Endothelial cell of umbilical vein (primary cell): ENCODE measurements at regions of chr10 and their contacts with region 1.

Region 1: DNA sequence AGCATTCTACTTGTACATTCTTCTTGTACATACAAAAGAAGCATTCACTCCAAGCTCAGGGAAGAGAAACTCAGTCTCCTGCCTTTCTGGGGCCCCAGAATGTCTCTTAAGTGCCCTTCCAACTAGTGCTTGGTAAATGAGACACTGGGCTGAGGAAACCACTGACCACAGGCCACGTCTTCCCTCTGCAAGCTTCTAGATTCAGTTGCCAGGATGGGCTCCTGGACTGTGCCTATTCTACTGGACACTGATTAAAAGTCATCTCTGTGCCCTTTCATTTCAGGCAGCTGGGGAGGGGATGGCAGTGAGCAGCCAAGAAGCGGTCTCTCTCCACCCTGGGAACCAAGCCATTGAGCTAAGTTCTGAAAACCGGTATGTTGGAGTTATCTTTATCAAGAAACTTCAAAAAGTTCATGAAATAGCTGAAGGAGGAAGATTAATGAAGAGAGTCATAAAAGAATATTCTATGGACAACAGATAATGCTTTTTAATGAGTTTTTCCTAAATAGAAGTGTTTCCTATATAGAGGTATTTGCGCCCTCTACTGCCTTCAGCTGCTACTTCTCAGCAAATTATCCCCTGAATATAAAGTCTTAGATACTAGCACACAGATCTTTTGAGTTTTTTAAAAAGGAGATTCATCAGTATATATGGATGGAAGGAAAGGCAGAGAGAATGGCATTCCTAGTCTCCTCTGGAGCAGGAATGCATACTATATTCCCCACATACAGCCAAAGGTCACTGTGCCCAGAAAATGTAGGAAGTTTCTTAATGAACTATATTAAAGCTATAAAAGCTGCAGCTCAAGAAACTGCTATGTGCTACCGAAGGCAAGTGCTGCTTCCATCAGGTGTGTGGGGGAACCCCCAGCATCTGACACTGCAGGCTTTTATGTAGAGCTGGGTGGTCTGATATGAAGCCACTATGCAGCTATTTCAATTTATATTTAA is 8.4 kb upstream of the IFIT1B start:
- DNase-seq: peak; percentile 61
- H3K4me3 ChIP-seq: no peak overlapping the region
- H3K27ac ChIP-seq: no peak overlapping the region
- H3K4me1 ChIP-seq: peaks cover 6% of the 10 kb centered on the region
- H3K27me3 ChIP-seq: peaks cover 4 to 8% of the 10 kb centered on the region in 2 experiments
- CTCF ChIP-seq: peak; percentile 43 to 52
- POLR2A ChIP-seq: no peak

Region 2: DNA sequence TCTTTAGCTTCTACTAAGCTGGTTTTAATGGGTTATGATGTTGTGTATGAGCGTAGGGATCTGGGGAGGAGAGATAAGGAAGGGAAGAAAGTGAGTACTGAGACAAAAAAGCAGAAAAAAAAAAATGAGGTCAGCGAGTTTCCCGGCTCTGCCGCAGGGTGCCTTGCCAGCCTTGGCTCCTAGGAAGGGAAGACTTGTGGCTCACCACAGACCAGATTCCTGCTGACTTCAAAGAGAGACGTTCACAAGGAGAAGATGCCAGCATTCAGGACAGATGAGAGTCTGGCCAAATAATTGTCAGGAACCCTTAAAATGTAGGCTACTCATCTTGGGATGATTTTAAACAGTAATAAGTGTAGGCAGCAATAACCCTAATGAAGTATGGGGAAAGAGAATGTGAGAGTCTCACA is 390.3 kb before region 1 on chr10:
- CTCF ChIA-PET with region 1: no interaction called
- POLR2A ChIA-PET with region 1: no interaction called
- dilution Hi-C with region 1: no loop called
- intact Hi-C with region 1: no loop called
- DNase-seq: no peak
- H3K4me3 ChIP-seq: no peak overlapping the region
- H3K27ac ChIP-seq: no peak overlapping the region
- H3K4me1 ChIP-seq: peaks cover 21% of the 10 kb centered on the region
- H3K27me3 ChIP-seq: no peaks in the 10 kb centered on the region
- CTCF ChIP-seq: no peak
- POLR2A ChIP-seq: no peak

Region 3: GRCh38 chr10:89251409-89252224 is 117.8 kb before region 1 on chr10 and contains the start of gene LIPA:
- CTCF ChIA-PET with region 1: interaction called, 10 read pairs
- POLR2A ChIA-PET with region 1: no interaction called
- dilution Hi-C with region 1: no loop called
- intact Hi-C with region 1: no loop called
- DNase-seq: peak; percentile 97
- H3K4me3 ChIP-seq: peak within 1 kb of the TSS; percentile 54 to 67 (median 56)
- H3K27ac ChIP-seq: no peak within 1 kb of the TSS
- H3K4me1 ChIP-seq: peaks cover 6% of the 10 kb centered on the region
- H3K27me3 ChIP-seq: peaks cover 8 to 11% of the 10 kb centered on the region in 2 experiments
- CTCF ChIP-seq: no peak
- POLR2A ChIP-seq: no peak
- total RNA-seq, gene LIPA: 28.1 and 41.1 TPM in 2 replicates

Region 4: GRCh38 chr10:89278034-89278535 is 91.3 kb before region 1 on chr10:
- CTCF ChIA-PET with region 1: interaction called, 31 read pairs
- POLR2A ChIA-PET with region 1: no interaction called
- dilution Hi-C with region 1: no loop called
- intact Hi-C with region 1: loop called (anchors 1 kb)
- DNase-seq: peak; percentile 98
- H3K4me3 ChIP-seq: peak overlapping the region in 1 of 3 experiments; percentile 12
- H3K27ac ChIP-seq: peak overlapping the region; percentile 49
- H3K4me1 ChIP-seq: peaks cover 38% of the 10 kb centered on the region
- H3K27me3 ChIP-seq: peaks cover 38 to 72% of the 10 kb centered on the region in 2 experiments
- CTCF ChIP-seq: no peak
- POLR2A ChIP-seq: no peak

Region 5: GRCh38 chr10:89301721-89302445 is 67.5 kb before region 1 on chr10 and contains the start of gene IFIT2:
- CTCF ChIA-PET with region 1: interaction called, 35 read pairs
- POLR2A ChIA-PET with region 1: interaction called, 3 read pairs
- dilution Hi-C with region 1: no loop called
- intact Hi-C with region 1: no loop called
- DNase-seq: peak; percentile 87
- H3K4me3 ChIP-seq: peak within 1 kb of the TSS; percentile 34 to 91 (median 71)
- H3K27ac ChIP-seq: peak within 1 kb of the TSS; percentile 33
- H3K4me1 ChIP-seq: peaks cover 10% of the 10 kb centered on the region
- H3K27me3 ChIP-seq: peaks cover 15 to 22% of the 10 kb centered on the region in 2 experiments
- CTCF ChIP-seq: no peak
- POLR2A ChIP-seq: no peak
- total RNA-seq, gene IFIT2: 0.51 and 1.4 TPM in 2 replicates

Region 6: DNA sequence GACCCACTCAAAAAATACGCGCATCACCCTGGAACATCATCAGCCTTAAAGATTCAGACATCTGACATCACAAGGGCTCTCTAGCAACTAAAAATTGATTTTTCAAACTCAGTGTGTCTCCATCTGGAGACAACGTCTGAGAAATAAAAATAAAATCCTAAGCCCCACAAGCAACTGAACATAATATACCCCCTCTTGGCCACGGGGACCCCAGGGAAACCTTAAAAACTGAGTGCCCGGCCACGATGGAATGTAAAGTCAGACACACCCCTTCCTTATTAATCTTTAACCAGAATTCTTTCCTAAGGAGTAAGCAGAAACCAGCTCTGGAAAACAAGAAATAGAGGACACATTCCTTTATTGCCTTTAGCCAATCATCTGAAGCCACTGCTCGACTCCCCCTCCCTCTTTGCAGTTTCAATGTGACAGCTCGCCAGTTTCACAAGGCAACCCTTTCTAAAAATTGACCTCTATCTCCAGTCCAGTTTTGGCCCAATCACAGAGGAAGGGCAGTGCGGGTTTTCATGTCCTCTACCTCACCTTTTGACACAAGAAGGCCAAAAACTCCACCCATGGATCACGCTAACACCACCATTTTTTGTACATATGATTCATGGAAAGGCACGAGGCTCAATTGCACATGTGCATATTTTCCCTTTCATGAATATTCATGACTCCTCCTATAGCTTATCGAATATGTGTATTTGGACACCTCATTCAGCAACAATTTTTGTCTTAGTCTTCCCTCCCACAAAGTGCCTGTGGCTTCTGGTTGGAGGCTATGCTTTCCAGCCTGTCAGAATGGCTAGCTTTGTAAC is 17.4 kb before region 1 on chr10:
- CTCF ChIA-PET with region 1: interaction called, 10 read pairs
- POLR2A ChIA-PET with region 1: no interaction called
- dilution Hi-C with region 1: no loop called
- intact Hi-C with region 1: no loop called
- DNase-seq: peak; percentile 62
- H3K4me3 ChIP-seq: no peak overlapping the region
- H3K27ac ChIP-seq: no peak overlapping the region
- H3K4me1 ChIP-seq: peaks cover 13% of the 10 kb centered on the region
- H3K27me3 ChIP-seq: peaks cover under 1 to 5% of the 10 kb centered on the region in 2 experiments
- CTCF ChIP-seq: no peak
- POLR2A ChIP-seq: no peak

Region 7: DNA sequence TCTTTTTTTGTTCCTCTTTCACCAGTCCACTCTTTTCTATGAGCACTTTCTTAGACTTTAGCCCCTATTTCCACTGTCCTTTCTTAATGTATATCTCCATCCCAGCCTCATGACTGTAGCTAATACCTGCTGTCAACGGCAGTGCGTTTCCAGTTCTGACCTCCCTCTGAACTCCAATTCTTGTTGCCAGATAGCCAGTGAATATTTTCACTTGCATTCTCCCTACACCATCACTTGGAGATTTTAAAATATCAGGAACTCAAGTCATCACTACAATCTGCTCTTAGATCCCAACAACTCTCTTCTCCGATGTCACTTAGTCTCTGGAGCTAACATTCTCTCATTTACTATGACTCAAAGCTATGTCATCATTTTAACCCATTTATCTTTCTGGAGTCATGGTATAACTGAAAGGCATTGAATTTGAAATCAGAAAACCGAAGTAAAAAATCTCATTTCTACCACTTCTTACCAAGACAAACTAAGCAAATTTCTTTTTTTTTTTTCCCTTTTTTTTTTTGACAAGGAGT is 171.1 kb after region 1 on chr10:
- CTCF ChIA-PET with region 1: no interaction called
- POLR2A ChIA-PET with region 1: no interaction called
- dilution Hi-C with region 1: no loop called
- intact Hi-C with region 1: no loop called
- DNase-seq: no peak
- H3K4me3 ChIP-seq: no peak overlapping the region
- H3K27ac ChIP-seq: no peak overlapping the region
- H3K4me1 ChIP-seq: no peaks in the 10 kb centered on the region
- H3K27me3 ChIP-seq: peaks cover 19 to 26% of the 10 kb centered on the region in 2 experiments
- CTCF ChIP-seq: no peak
- POLR2A ChIP-seq: no peak